OCI-LY7 (cell line): ENCODE measurements at regions of chr1 and their contacts with region 1.

Region 1: DNA sequence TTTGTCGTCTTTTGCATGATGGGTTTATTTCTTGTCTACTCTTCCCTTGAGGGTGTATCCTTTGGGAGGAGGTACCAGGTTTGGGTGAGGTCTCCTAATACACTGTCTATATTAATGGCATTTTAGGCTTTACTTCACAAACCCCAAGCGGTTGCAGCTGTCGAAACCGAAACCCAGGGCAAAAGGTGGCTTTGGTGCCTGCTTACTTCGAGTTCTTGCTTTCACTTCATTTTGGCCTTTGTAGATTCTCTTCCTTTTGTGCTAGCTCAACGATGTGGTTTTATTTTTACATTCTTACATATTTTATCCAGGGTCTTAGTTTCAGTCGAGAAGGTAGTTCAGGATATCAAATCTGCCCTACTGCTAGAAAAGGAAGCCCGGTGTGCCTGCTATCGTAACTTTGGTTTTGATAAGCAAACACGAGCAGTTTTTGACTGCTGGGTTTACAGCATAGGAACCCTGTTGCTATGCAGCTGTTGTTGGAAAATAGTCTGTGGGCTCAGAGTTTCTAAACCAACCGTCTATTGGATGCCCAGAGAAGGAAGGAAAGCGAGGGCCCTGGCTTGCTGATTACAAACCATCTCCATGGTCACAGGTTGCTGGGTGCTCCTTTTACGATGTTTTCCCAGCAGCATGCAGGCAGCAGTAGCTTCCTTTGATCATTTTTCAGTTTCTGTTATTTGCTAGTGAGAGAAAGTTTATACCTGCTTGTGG is 9.8 kb upstream of the TSPAN2 start:
- DNase-seq: peak; percentile 87
- H3K4me3 ChIP-seq: peak overlapping the region; percentile 70
- H3K27ac ChIP-seq: peak overlapping the region; percentile 93
- H3K4me1 ChIP-seq: peaks cover 40% of the 10 kb centered on the region
- CTCF ChIP-seq: no peak

Region 2: GRCh38 chr1:114757455-114758250 is 341.5 kb before region 1 on chr1 and contains the start of gene CSDE1:
- CTCF ChIA-PET with region 1: no interaction called
- POLR2A ChIA-PET with region 1: no interaction called
- intact Hi-C with region 1: loop called (anchors 10 kb)
- DNase-seq: peak; percentile 99
- H3K4me3 ChIP-seq: peak within 1 kb of the TSS; percentile 90
- H3K27ac ChIP-seq: peak within 1 kb of the TSS; percentile 84
- H3K4me1 ChIP-seq: peaks cover 40% of the 10 kb centered on the region
- CTCF ChIP-seq: peak; percentile 69
- total RNA-seq, gene CSDE1: 177 and 223 TPM in 2 replicates